Breast epithelium (tissue), 4 donors: ENCODE measurements at regions of chr1 and their contacts with region 1.

Region 1: DNA sequence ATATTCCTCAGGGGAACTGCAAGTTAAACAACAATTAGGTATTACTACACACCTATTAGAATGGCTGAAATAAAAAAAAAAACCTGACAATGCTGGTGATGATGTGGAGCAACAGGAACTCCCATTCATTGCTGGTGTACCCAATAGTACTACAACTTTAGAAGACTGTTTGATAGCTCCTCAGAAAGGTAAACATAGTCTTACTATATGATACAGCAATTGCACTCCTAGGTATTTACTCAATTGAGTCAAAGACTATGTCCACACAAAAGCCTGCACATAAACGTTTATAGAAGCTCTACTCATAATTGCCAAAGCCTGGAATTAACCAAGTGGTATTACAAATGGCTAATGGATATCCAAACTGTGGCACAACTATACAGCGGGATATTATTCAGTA is 524.7 kb upstream of the NR5A2 start:
- DNase-seq: no peak
- H3K4me3 ChIP-seq: no peak overlapping the region
- H3K27ac ChIP-seq: no peak overlapping the region
- H3K4me1 ChIP-seq: no peaks in the 10 kb centered on the region
- H3K27me3 ChIP-seq: no peaks in the 10 kb centered on the region
- CTCF ChIP-seq: no peak
- POLR2A ChIP-seq: no peak

Region 2: GRCh38 chr1:199759268-199759724 is 256.5 kb after region 1 on chr1:
- intact Hi-C with region 1: loop called (anchors 5 kb)
- DNase-seq: no peak
- H3K4me3 ChIP-seq: no peak overlapping the region
- H3K27ac ChIP-seq: no peak overlapping the region
- H3K4me1 ChIP-seq: no peaks in the 10 kb centered on the region
- H3K27me3 ChIP-seq: peaks cover 0 to 3% of the 10 kb centered on the region in 2 donors
- CTCF ChIP-seq: no peak
- POLR2A ChIP-seq: no peak